PC-9 (cell line): ENCODE measurements at regions of chr11 and their contacts with region 1.

Region 1: DNA sequence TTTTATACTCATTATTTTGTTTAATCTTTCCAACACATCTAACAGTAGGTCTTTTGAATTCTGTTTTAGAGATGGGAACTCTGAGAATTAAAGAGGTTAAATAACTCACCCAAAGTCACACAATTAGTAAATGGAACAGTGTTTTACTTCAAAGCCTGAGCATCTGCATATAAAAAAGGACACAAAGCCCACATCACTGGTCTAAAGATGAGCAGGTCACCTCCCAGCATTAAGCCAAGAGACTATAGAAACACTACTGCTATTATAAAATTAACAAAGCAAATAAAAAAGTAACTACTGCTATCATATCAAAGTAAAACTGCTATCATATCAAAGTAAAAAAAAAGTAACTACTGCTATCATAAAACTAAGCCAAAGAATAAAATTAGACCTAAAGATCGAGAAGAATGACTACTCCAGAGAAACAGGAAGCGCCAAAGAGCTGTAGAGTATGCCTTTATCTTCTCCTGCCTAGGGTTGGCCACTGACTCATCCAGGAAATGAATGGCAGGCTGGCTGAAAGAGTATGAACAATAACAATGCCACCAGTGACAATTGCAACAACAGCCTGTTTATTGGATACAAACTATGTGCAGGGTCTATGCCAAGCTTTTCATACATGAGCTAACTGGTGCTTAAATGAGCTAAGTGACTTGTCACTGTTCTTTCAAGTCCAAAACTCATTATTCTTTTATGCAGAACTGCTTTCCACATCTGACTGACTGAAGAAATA is 1153.0 kb upstream of the TENM4 start:
- DNase-seq: peak; percentile 76 to 78
- H3K4me3 ChIP-seq: no peak overlapping the region
- H3K27ac ChIP-seq: peak overlapping the region; percentile 33
- H3K4me1 ChIP-seq: peaks cover 19% of the 10 kb centered on the region
- H3K27me3 ChIP-seq: no peaks in the 10 kb centered on the region
- CTCF ChIP-seq: no peak

Region 2: DNA sequence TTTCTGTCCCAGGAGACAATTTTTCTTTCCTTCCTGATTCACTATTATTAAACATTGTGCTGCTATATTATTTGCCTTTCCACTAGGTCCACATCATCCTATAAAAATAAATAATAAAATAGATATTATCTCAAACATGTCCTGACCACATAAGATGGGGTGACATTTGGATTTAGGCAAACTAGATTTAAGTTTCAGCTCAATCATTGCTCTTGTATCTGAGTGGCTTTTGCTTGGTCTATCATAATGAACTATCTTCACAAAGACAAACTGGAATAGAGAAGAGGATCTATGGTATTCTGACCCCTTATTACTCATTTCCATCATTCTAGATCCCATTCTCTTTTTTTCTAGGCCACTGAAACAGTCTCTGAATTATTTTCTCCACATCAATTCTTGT is 345.7 kb before region 1 on chr11:
- CTCF ChIA-PET with region 1: no interaction called
- POLR2A ChIA-PET with region 1: no interaction called
- intact Hi-C with region 1: no loop called
- DNase-seq: no peak
- H3K4me3 ChIP-seq: no peak overlapping the region
- H3K27ac ChIP-seq: no peak overlapping the region
- H3K4me1 ChIP-seq: no peaks in the 10 kb centered on the region
- H3K27me3 ChIP-seq: no peaks in the 10 kb centered on the region
- CTCF ChIP-seq: no peak

Region 3: GRCh38 chr11:80297884-80298632 is 295.8 kb before region 1 on chr11:
- CTCF ChIA-PET with region 1: no interaction called
- POLR2A ChIA-PET with region 1: no interaction called
- intact Hi-C with region 1: loop called (anchors 5 kb)
- DNase-seq: peak; percentile 51 to 88
- H3K4me3 ChIP-seq: no peak overlapping the region; the same call in 1 of the 2 replicates
- H3K27ac ChIP-seq: peak overlapping the region; percentile 64
- H3K4me1 ChIP-seq: peaks cover 17% of the 10 kb centered on the region
- H3K27me3 ChIP-seq: no peaks in the 10 kb centered on the region
- CTCF ChIP-seq: no peak

Region 4: GRCh38 chr11:80414181-80415165 is 179.3 kb before region 1 on chr11:
- CTCF ChIA-PET with region 1: no interaction called
- POLR2A ChIA-PET with region 1: no interaction called
- intact Hi-C with region 1: no loop called
- DNase-seq: peak in 1 of 2 experiments; percentile 20
- H3K4me3 ChIP-seq: no peak overlapping the region
- H3K27ac ChIP-seq: no peak overlapping the region
- H3K4me1 ChIP-seq: no peaks in the 10 kb centered on the region
- H3K27me3 ChIP-seq: no peaks in the 10 kb centered on the region
- CTCF ChIP-seq: no peak

Region 5: DNA sequence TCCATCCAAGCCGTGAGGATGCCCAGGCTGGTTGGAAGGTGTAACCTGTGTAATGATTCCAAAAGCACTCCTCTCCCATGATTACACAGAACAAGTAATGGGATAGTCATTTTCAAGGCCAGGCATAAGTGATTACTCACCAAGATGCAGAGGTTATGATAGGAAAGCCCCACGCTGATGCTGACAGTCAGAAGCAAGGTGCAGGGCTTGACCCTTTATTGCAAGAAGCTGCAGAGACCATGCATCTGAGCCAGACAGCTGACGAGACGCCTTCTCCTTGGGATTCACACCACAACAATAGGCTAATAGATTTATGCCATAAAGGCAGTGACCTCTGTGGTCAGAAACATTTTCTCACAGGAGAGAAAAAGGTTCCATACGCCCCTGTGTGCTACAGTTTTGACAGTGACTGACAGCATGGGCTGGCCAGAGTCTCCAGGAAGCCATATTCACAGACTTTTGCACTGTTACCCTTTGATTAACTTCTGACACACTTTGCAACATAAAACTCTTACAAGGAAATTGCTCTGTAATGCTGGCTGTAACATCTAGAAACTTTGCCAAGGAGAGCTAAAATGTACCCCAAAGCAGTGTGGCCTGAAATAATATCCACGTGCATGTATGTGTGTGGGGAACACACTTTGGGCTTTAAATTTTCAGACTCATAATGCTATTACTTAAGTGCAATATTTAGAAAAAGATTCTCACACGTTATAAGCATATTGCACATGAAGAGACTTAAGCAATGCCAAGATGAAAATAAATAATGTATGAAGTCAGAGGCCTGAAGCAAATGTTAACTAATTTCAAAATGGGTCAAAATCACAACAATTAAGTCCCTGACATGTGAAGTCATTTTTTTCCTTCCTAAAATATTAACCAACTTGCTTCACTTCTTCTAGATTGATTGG is 74.0 kb before region 1 on chr11:
- CTCF ChIA-PET with region 1: no interaction called
- POLR2A ChIA-PET with region 1: no interaction called
- intact Hi-C with region 1: loop called (anchors 2 kb)
- DNase-seq: peak in 1 of 2 experiments; percentile 32
- H3K4me3 ChIP-seq: no peak overlapping the region
- H3K27ac ChIP-seq: no peak overlapping the region
- H3K4me1 ChIP-seq: peaks cover 16% of the 10 kb centered on the region
- H3K27me3 ChIP-seq: no peaks in the 10 kb centered on the region
- CTCF ChIP-seq: no peak

Region 6: GRCh38 chr11:80700386-80700785 is 106.6 kb after region 1 on chr11:
- CTCF ChIA-PET with region 1: no interaction called
- POLR2A ChIA-PET with region 1: no interaction called
- intact Hi-C with region 1: loop called (anchors 2 kb)
- DNase-seq: no peak
- H3K4me3 ChIP-seq: no peak overlapping the region
- H3K27ac ChIP-seq: peak overlapping the region; percentile 58
- H3K4me1 ChIP-seq: peaks cover 34% of the 10 kb centered on the region
- H3K27me3 ChIP-seq: no peaks in the 10 kb centered on the region
- CTCF ChIP-seq: no peak

Region 7: DNA sequence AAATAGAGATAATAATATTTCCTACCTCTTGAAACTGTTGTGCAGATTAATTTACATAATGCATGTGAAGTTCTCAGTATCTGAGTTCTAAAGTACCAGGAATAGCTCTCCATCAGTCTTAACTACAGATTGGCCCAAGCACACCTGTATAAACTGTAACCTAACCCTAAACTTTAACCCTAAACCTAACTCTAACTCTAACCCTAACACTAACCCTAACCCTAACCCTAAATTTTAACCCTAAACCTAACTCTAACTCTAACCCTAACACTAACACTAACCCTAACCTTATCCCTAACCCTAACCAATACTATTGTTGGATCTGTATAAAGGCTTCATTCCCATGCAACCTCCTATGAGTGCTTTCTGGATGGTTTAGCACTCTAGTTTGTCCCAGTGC is 292.9 kb after region 1 on chr11:
- CTCF ChIA-PET with region 1: no interaction called
- POLR2A ChIA-PET with region 1: no interaction called
- intact Hi-C with region 1: no loop called
- DNase-seq: no peak
- H3K4me3 ChIP-seq: no peak overlapping the region
- H3K27ac ChIP-seq: no peak overlapping the region
- H3K4me1 ChIP-seq: no peaks in the 10 kb centered on the region
- H3K27me3 ChIP-seq: no peaks in the 10 kb centered on the region
- CTCF ChIP-seq: no peak